ENCODE measurements at regions of chr20 and their contacts with region 1.

Region 1: GRCh38 chr20:32516583-32517517 is 68.3 kb downstream of the NOL4L start:
- DNase-seq: no peak
- ATAC-seq: no peak
- H3K4me3 ChIP-seq: no peak overlapping the region
- H3K27ac ChIP-seq: no peak overlapping the region
- H3K4me1 ChIP-seq: peaks cover 22% of the 10 kb centered on the region
- H3K27me3 ChIP-seq: no peaks in the 10 kb centered on the region
- CTCF ChIP-seq: no peak
- EP300 ChIP-seq: no peak
- POLR2A ChIP-seq: no peak
- RAD21 ChIP-seq: no peak

Region 2: DNA sequence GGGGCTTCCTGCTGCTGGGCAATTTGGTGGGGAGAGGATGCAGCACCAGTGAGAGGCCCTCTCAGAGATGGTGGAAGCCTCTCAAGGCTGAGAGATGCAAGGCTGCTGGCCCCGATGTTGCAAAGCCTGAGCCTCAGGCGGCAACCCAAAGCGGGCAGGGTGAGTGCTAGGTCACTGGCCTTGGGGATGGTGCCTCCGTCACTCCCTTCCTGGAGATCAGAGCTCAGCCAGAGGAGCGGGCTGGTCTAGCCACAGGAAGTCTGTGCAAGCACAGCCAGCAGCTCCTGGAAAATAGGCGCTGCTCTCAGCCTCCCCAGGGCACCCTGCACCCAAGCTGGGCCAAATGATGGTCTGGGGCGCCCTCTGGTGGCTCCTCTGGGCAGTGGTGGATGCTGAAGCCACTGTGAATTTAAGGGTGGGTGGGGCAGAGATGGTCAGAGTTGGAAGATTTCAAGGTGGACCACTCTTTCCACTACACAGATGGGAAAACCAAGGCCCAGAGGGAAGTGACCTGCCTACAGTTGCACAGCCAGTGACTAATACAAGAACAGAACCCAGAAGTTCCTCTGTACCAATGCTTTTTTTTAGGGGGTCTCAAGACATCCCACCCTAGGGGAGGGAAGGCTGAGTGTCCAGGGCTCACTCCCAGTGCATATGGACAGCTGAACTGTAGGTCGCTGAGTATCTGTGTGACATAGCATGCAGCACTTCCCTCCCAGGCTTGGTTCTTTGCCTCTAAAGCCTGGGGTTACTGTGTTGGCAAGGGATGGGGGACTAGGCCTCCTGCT is 136.1 kb after region 1 on chr20:
- CTCF ChIA-PET with region 1: interaction called, 170 read pairs
- POLR2A ChIA-PET with region 1: interaction called, 35 read pairs
- in situ Hi-C with region 1: loop called (anchors 5 kb)
- intact Hi-C with region 1: loop called (anchors 1 kb)
- DNase-seq: peak; percentile 89
- ATAC-seq: peak; percentile 98
- H3K4me3 ChIP-seq: peak overlapping the region in 1 of 3 experiments; percentile 45; a peak in 1 of 6 replicates
- H3K27ac ChIP-seq: no peak overlapping the region
- H3K4me1 ChIP-seq: peaks cover 18% of the 10 kb centered on the region
- H3K27me3 ChIP-seq: peaks cover 2 to 30% of the 10 kb centered on the region in 2 experiments; a peak in 4 of 5 replicates
- CTCF ChIP-seq: peak; percentile 100
- EP300 ChIP-seq: peak in 1 of 2 experiments; percentile 56; a peak in 2 of 4 replicates
- POLR2A ChIP-seq: no peak
- RAD21 ChIP-seq: peak; percentile 100